Gastrocnemius medialis (tissue), 4 donors: ENCODE measurements at regions of chr19 and their contacts with region 1.

Region 1: DNA sequence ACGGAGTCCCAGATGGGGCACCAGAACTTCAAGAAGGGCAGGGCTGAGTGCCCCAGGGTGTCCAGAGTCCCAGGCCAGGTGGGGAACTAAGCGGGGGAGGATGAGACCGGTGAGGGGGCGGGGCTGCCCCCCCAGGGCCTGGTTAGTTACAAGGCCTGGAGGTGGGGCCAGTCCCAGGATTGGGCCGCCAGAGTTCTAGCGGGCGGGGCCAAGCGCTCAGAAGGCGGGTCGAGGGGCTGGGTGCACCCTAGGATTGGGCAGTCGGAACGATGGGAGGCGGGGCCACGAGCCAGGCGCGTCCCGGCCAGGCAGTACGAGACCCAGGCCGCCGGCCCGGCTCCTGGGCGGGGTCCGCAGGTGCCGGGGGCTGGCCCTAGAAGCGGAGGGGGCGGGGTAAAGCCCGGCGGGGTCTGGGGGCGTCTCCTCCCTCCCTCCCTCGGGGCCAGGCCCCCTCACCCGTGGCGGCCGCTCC is 571 bp downstream of the ZNF653 start:
- DNase-seq: peak; percentile 95 to 97
- ATAC-seq: peak; percentile 91 to 92
- H3K4me3 ChIP-seq: peak overlapping the region; percentile 70 to 99 (median 88)
- H3K27ac ChIP-seq: peak overlapping the region; percentile 83 to 99 (median 97)
- H3K4me1 ChIP-seq: peaks cover 8 to 12% of the 10 kb centered on the region in 2 donors
- H3K27me3 ChIP-seq: no peaks in the 10 kb centered on the region
- CTCF ChIP-seq: no peak
- POLR2A ChIP-seq: no peak

Region 2: GRCh38 chr19:11528551-11529341 is 23.7 kb after region 1 on chr19 and contains the start of gene ECSIT:
- in situ Hi-C with region 1: no loop called
- intact Hi-C with region 1: loop called (anchors 1 kb)
- DNase-seq: peak; percentile 96 to 99
- ATAC-seq: peak; percentile 99 to 100
- H3K4me3 ChIP-seq: peak within 1 kb of the TSS; percentile 77 to 92 (median 83)
- H3K27ac ChIP-seq: peak within 1 kb of the TSS; percentile 89 to 93 (median 92)
- H3K4me1 ChIP-seq: peaks cover 13 to 24% of the 10 kb centered on the region in 2 donors
- H3K27me3 ChIP-seq: no peaks in the 10 kb centered on the region
- CTCF ChIP-seq: no peak
- POLR2A ChIP-seq: peak in 1 of 2 donors; percentile 36
- total RNA-seq, gene ECSIT: 82.9 to 199 (median 129) TPM

Region 3: GRCh38 chr19:11587302-11587974 is 82.4 kb after region 1 on chr19:
- in situ Hi-C with region 1: no loop called
- intact Hi-C with region 1: no loop called
- DNase-seq: peak; percentile 41 to 56
- ATAC-seq: peak; percentile 54 to 68
- H3K4me3 ChIP-seq: no peak overlapping the region
- H3K27ac ChIP-seq: no peak overlapping the region
- H3K4me1 ChIP-seq: peaks cover 0 to 5% of the 10 kb centered on the region in 2 donors
- H3K27me3 ChIP-seq: no peaks in the 10 kb centered on the region
- CTCF ChIP-seq: peak; percentile 78 to 88 (median 83)
- POLR2A ChIP-seq: no peak